AG04450 (cell line): ENCODE measurements at regions of chr16 and their contacts with region 1.

Region 1: GRCh38 chr16:81181013-81181720 is 57.3 kb upstream of the BCO1 start:
- DNase-seq: peak; percentile 89
- H3K4me3 ChIP-seq: peak overlapping the region; percentile 11
- H3K27ac ChIP-seq: peak overlapping the region; percentile 78
- H3K27me3 ChIP-seq: no peaks in the 10 kb centered on the region
- CTCF ChIP-seq: no peak

Region 2: DNA sequence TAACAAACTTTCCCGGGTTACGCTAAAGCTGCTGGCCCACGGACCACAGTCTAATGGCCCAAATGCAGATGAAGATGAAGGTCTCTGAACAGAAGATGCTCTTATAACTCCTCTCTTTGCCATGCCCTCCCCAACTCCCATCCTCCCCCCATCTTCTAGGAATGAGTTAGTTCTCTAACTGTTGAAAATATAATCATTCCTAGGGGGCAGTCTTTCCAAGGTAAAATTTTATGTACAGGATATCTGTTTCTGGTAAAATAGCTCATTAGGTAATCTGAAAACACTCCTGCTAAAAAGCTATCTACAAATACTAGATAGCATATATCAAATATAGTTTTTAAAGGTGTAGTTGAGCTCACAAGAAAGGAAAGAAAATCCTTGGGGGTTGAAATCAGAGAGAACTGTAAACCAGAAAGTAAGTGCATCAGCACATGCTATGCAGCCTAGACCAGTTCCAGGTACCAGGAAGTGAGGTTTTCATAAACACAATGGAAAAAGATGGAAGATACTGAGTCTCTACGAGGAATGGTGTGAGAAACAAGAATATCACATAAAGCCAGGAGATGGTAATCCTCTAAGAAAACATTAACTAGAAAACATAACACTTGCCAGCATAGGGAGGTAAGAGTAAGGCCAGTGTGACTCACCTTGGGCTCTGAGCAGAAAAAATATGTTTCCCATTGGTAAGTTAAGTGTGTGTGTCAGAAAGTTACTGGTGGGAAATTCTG is 212.6 kb before region 1 on chr16:
- CTCF ChIA-PET with region 1: no interaction called
- POLR2A ChIA-PET with region 1: interaction called, 13 read pairs
- DNase-seq: no peak
- H3K4me3 ChIP-seq: no peak overlapping the region
- H3K27ac ChIP-seq: no peak overlapping the region
- H3K27me3 ChIP-seq: no peaks in the 10 kb centered on the region
- CTCF ChIP-seq: no peak